ENCODE measurements at regions of chr10 and their contacts with region 1.

Region 1: DNA sequence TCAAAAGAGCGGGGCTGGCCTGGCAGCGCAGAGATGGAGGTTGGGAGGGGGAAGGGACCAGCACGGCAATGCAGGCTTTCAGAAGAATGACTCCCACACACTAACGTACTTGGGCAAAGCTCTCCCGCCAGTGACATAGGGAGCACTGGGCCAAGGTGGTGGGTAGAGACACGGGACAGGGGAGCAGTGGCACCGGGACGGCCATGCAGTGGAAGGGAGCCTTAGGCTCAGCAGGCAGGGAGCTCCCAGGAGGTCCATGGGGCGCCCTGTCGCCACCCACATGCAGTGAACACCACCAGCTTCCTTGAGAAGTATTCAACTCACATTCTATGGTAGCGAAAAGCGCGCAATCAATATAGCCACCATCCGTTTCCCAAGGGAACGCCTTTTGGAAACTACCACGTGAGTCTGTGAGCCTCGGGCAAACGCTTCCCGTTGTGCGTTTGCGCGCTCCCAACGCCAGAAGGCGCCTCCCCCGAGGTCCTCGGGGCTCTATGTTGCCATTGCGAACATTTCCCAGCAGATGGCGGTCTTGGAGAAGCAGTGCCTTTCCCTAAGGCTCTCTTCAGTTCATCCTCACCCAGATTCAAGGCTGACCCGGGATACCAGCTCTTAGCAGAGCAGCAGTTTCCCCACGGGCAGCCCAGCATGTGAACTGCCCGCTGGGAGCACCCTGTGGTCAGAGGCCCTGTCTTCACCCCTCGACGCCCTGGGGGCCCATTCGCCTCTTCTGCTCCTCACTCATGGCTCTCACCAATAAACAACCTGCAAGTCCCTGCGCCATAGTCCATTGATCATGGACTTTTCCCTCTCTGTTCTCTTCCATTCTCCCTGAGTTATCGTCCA is 16.4 kb upstream of the OPALIN start:
- DNase-seq: peak; percentile 84 to 88
- ATAC-seq: peak; percentile 83 to 90 (median 86)
- H3K4me3 ChIP-seq: peak overlapping the region in 9 of 10 donors; percentile 30 to 58 (median 50)
- H3K27ac ChIP-seq: peak overlapping the region in 2 of 10 donors; percentile 15 to 30
- H3K4me1 ChIP-seq: peaks cover 2 to 38% (median 14%) of the 10 kb centered on the region in 9 donors
- H3K27me3 ChIP-seq: no peaks in the 10 kb centered on the region
- CTCF ChIP-seq: peak; percentile 91 to 100 (median 98)

Region 2: DNA sequence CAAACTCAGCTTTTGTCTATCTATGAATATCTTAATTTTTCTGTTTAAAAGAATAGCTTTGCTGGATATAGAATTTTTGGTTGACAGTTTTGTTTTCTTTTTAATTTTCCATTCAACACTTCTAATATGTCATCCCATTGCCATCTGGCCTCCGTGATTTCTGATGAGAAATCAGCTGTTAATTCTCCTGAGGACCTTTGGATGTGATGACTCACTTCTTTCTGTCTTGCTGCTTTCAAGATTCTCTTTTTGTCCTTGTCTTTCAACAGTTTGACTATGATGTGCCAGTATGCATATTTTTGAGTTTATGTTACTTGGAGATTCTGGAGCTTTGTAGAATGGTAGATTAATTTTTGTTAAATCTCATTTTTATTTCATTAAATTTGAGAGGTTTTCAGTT is 206.7 kb before region 1 on chr10:
- intact Hi-C with region 1: no loop called
- DNase-seq: no peak
- ATAC-seq: no peak
- H3K4me3 ChIP-seq: no peak overlapping the region
- H3K27ac ChIP-seq: no peak overlapping the region
- H3K4me1 ChIP-seq: no peaks in the 10 kb centered on the region
- H3K27me3 ChIP-seq: no peaks in the 10 kb centered on the region
- CTCF ChIP-seq: no peak

Region 3: DNA sequence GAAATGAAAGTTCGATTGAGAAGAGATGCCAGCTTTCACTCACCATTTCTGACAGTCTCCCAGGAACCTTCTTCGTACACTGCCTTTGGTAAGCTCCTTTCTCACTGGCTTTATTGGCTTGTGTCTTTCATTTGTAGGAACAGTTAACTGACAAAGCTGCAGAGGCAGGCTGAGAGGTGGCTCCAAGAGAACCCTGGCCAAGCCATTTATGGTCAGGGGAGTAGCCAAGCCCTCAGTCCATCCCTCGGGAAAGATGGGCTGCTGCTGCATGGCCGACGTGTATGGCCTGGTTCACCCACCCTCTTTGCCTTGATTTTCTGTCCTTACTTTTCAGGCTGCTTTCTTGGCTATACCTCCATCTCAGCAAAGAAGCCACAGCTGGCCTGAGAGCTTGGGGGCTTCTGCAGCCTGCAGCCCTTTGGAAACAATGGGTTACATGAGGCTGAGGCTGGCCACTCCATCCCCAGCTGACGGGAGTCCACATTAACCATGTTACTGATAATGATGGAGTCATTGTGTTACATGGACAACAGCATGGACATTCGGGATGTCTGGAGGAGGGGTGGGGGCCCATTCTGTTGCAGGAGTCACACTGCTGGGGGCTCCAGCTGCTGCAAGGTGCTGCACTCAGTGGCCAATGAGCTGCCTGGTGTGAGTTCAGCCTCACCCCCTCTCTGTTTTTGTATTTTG is 16.2 kb before region 1 on chr10 and contains the start of gene OPALIN:
- intact Hi-C with region 1: no loop called
- DNase-seq: no peak
- ATAC-seq: no peak
- H3K4me3 ChIP-seq: no peak within 1 kb of the TSS
- H3K27ac ChIP-seq: no peak within 1 kb of the TSS
- H3K4me1 ChIP-seq: no peaks in the 10 kb centered on the region
- H3K27me3 ChIP-seq: peaks cover 0 to 16% (median 7%) of the 10 kb centered on the region in 7 donors
- CTCF ChIP-seq: no peak
- total RNA-seq, gene OPALIN: not detected

Region 4: GRCh38 chr10:96513698-96514561 is 138.7 kb after region 1 on chr10 and contains the start of gene TLL2:
- intact Hi-C with region 1: loop called in 4 of 10 experiments (anchors 2 to 5 kb)
- DNase-seq: peak; percentile 88 to 90
- ATAC-seq: peak; percentile 93 to 97 (median 96)
- H3K4me3 ChIP-seq: peak within 1 kb of the TSS; percentile 46 to 89 (median 62)
- H3K27ac ChIP-seq: peak within 1 kb of the TSS in 8 of 10 donors; percentile 39 to 71 (median 67)
- H3K4me1 ChIP-seq: peaks cover 3 to 25% (median 24%) of the 10 kb centered on the region in 9 donors
- H3K27me3 ChIP-seq: peaks cover 0 to 35% (median 3%) of the 10 kb centered on the region in 7 donors
- CTCF ChIP-seq: peak; percentile 48 to 95 (median 77)
- total RNA-seq, gene TLL2: 2.8 to 9.2 (median 6.9) TPM

Region 5: DNA sequence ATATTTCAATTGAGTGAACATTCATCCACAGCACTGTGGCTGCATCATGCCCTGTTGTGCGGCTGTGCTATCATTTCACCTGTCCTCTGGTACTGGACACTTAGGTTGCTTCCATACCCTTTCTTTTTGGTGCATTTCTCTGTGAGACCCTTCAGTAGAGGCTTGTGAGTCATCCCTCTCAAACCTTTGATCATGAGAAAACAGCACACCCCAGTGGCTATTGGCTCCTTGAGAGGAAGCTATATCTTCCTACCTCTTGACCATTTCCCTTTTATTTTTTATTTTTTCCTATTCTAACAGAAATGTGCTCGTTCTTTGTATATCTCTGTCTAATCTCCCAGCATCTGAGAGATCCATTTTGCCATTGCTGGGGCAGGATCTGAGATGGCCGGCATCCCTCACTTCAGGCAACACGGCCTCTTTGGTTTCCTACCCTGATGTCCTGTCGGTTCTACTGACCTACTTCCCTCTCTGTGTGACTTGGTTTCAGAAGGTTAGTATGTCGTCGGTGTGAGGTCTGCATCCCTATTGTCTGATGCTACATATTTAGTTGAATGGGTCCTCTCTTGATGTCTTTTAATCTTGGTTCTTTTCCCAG is 368.9 kb after region 1 on chr10:
- intact Hi-C with region 1: loop called in 3 of 10 experiments (anchors 5 to 10 kb)
- DNase-seq: no peak
- ATAC-seq: peak in 1 of 8 donors; percentile 55
- H3K4me3 ChIP-seq: no peak overlapping the region
- H3K27ac ChIP-seq: no peak overlapping the region
- H3K4me1 ChIP-seq: peaks cover 0 to 43% (median 0%) of the 10 kb centered on the region in 9 donors
- H3K27me3 ChIP-seq: peaks cover 0 to 9% (median 0%) of the 10 kb centered on the region in 7 donors
- CTCF ChIP-seq: peak in 8 of 9 donors; percentile 8 to 51 (median 30)